Mammary epithelial cell (primary cell): ENCODE measurements at regions of chr3 and their contacts with region 1.

Region 1: GRCh38 chr3:171351676-171352075 is 108.5 kb downstream of the TNIK start:
- DNase-seq: peak; percentile 98
- H3K4me3 ChIP-seq: no peak overlapping the region
- H3K27ac ChIP-seq: peak overlapping the region; percentile 65
- H3K4me1 ChIP-seq: peaks cover 87% of the 10 kb centered on the region
- H3K27me3 ChIP-seq: no peaks in the 10 kb centered on the region
- CTCF ChIP-seq: no peak

Region 2: DNA sequence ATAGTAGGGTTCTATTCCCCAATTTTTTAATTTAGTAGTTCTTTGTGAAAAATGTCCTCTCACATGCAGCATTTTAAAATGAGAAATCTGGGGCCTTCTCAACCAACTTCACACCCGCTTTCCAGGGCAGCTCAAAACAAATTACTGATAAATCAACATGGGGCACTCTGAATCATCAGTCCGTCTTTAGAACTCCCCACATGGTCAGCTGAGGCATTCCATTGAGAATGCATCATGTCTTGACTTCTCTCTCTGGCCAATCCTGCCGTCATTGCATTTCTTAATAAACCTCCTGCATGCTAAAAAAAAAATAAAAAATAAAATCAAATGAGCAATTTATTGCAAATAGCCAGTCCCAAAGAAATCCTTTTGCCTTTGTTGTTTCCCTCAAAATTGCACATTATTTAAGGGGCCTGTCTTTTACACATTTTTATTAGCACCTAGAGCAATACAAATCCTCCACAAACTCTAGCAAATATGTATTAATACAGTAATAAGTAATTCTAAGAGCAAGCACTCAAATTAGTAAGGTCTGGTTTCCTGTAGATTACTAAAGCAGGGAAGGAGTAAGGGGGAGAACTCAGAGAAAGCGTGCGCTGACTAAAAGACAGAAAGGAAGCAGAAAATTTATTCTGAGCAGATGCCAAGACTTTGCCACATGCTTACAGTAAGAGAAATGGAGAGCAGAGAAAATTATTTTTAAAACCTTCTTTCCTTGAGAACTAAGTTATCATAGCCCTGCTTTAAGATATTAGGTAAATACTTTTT is 67.2 kb before region 1 on chr3:
- CTCF ChIA-PET with region 1: no interaction called
- dilution Hi-C with region 1: no loop called
- in situ Hi-C with region 1: no loop called
- intact Hi-C with region 1: loop called (anchors 1 kb)
- DNase-seq: peak; percentile 92
- H3K4me3 ChIP-seq: peak overlapping the region in 1 of 3 experiments; percentile 13
- H3K27ac ChIP-seq: peak overlapping the region; percentile 82
- H3K4me1 ChIP-seq: peaks cover 37% of the 10 kb centered on the region
- H3K27me3 ChIP-seq: no peaks in the 10 kb centered on the region
- CTCF ChIP-seq: no peak

Region 3: DNA sequence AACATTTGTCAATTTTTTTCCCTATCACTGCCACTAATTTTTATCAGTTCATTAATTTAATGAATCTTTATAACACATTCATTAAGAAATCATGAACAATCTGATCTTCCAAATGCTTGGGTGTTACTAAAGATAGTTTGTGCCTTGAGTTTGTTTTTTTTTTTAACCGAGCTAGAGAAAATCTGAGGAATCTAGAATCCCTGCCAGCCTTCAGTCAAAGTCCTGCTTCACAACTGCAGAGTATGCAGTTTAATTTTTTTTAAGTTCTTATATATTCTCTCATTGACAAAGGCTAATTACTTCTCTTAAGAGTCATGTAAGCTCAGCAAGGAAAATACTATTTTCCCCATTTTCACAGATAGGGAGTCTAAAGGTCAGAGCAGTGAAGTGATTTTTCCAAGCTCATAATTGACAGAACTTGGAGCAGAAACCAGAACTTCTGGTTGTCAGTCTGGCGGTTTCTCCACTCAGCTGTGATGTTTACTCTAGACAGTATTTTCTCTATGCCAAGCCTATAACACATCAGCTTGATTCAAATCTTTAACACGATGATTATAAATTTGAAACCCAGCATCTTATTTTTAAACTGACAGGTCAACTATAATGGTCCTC is 52.8 kb after region 1 on chr3:
- CTCF ChIA-PET with region 1: no interaction called
- dilution Hi-C with region 1: no loop called
- in situ Hi-C with region 1: no loop called
- intact Hi-C with region 1: loop called (anchors 5 kb)
- DNase-seq: no peak
- H3K4me3 ChIP-seq: no peak overlapping the region
- H3K27ac ChIP-seq: no peak overlapping the region
- H3K4me1 ChIP-seq: peaks cover 7% of the 10 kb centered on the region
- H3K27me3 ChIP-seq: no peaks in the 10 kb centered on the region
- CTCF ChIP-seq: no peak